Activated CD4-positive, alpha-beta memory T cell treated with anti-CD3 and anti-CD28 coated beads, Interleukin-2, amount 10 ng/mL, durations not matched to agents 7 days and 5 days (primary cell): ENCODE measurements at regions of chr2 and their contacts with region 1.

Region 1: GRCh38 chr2:201158111-201158929 is 24.6 kb upstream of the CASP10 start:
- DNase-seq: peak; percentile 63
- H3K4me3 Mint-ChIP-seq: no peak overlapping the region
- H3K27ac Mint-ChIP-seq: peak overlapping the region; percentile 50
- H3K4me1 Mint-ChIP-seq: peaks cover 15% of the 10 kb centered on the region
- H3K27me3 Mint-ChIP-seq: no peaks in the 10 kb centered on the region

Region 2: GRCh38 chr2:201071479-201072200 is 86.7 kb before region 1 on chr2 and contains the starts of genes HYCC2 and NDUFB3:
- CTCF ChIA-PET with region 1: interaction called, 32 read pairs
- POLR2A ChIA-PET with region 1: interaction called, 7 read pairs
- DNase-seq: peak; percentile 95
- H3K4me3 Mint-ChIP-seq: peak within 1 kb of the TSS; percentile 96
- H3K27ac Mint-ChIP-seq: peak within 1 kb of the TSS; percentile 88
- H3K4me1 Mint-ChIP-seq: peaks cover 57% of the 10 kb centered on the region
- H3K27me3 Mint-ChIP-seq: no peaks in the 10 kb centered on the region
- total RNA-seq, gene HYCC2: 27.9 to 31.9 TPM
- total RNA-seq, gene NDUFB3: 133 to 135 TPM